ENCODE measurements at regions of chr5 and their contacts with region 1.

Region 1: GRCh38 chr5:74648835-74649293 is 8.3 kb upstream of the ENC1 start:
- DNase-seq: peak; percentile 65 to 85 (median 80)
- H3K4me3 ChIP-seq: peak overlapping the region in 1 of 7 experiments; percentile 20
- H3K27ac ChIP-seq: no peak overlapping the region
- H3K4me1 ChIP-seq: peaks cover 0 to 2% (median 0%) of the 10 kb centered on the region in 4 experiments
- H3K27me3 ChIP-seq: no peaks in the 10 kb centered on the region

Region 2: GRCh38 chr5:73902327-73903051 is 746.4 kb before region 1 on chr5:
- CTCF ChIA-PET with region 1: interaction called, 38 read pairs
- POLR2A ChIA-PET with region 1: no interaction called
- DNase-seq: peak; percentile 68 to 87 (median 84)
- H3K4me3 ChIP-seq: no peak overlapping the region
- H3K27ac ChIP-seq: no peak overlapping the region
- H3K4me1 ChIP-seq: peaks cover 3 to 12% (median 8%) of the 10 kb centered on the region in 4 experiments
- H3K27me3 ChIP-seq: no peaks in the 10 kb centered on the region

Region 3: DNA sequence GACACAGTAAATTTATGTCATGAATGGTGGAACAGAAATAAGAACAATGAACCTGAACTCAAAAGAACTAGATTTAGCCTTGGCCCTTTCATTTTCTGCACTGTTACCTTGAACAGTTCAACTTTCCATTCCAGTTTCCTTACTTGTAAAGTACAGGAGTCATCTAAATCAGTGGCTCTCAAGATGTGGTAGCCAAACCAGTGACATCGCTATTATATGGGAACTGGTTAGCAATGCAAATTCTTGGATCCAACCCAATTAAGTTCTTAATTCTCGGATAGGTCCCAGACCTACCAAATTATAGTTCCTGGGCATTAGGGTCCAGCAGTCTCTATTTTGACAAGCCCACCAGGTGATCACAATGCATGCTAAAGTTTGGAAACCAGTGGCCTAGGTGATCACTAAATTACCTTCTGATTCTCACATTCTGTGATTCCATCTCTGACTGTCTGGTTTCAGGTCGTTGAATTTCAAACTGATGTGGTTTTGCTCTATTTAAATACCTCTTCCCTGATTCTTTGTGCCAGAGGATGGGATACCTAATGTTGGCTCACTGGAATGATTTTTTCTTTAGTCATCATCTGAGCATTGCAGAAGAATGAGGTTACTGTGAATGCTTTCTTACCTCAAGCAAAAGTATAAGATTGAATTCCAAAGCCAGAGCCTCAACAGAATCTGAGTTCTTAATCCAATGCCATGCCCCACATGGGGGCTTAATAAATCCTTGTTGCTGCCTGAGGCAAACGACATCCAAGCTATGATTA is 262.1 kb before region 1 on chr5:
- CTCF ChIA-PET with region 1: no interaction called
- POLR2A ChIA-PET with region 1: no interaction called
- DNase-seq: no peak
- H3K4me3 ChIP-seq: no peak overlapping the region
- H3K27ac ChIP-seq: no peak overlapping the region
- H3K4me1 ChIP-seq: peaks cover 0 to 5% (median 0%) of the 10 kb centered on the region in 4 experiments
- H3K27me3 ChIP-seq: no peaks in the 10 kb centered on the region

Region 4: DNA sequence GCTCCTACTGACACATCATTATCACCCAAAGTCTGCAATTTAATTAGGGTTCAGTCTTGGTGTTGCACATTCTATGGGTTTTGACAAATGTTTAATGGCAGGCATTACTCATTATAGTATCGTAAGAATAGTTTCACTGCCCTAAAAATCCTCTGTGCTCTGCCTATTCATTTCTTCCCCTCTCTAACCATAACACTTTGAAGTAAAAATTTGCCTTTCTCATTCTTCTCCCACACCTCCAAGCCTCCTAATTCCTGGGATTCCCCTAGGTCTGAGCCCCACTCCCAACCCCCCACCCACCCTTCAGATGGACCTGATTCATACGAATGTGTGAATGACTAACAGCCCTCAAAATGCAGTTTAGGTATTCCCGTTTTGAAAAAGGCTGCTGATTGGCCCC is 26.7 kb before region 1 on chr5:
- CTCF ChIA-PET with region 1: no interaction called
- POLR2A ChIA-PET with region 1: no interaction called
- DNase-seq: no peak
- H3K4me3 ChIP-seq: no peak overlapping the region
- H3K27ac ChIP-seq: no peak overlapping the region
- H3K4me1 ChIP-seq: no peaks in the 10 kb centered on the region
- H3K27me3 ChIP-seq: no peaks in the 10 kb centered on the region